PC-9 (cell line): ENCODE measurements at regions of chr5 and their contacts with region 1.

Region 1: GRCh38 chr5:79990598-79991507 is at the start of gene MTX3:
- DNase-seq: peak; percentile 75 to 77
- H3K4me3 ChIP-seq: peak within 1 kb of the TSS; percentile 72
- H3K27ac ChIP-seq: peak within 1 kb of the TSS; percentile 81
- H3K4me1 ChIP-seq: peaks cover 23% of the 10 kb centered on the region
- H3K27me3 ChIP-seq: no peaks in the 10 kb centered on the region
- CTCF ChIP-seq: no peak
- total RNA-seq, gene MTX3: 20.9 and 22.8 TPM in 2 replicates

Region 2: GRCh38 chr5:79829260-79829659 is 161.6 kb before region 1 on chr5:
- CTCF ChIA-PET with region 1: no interaction called
- POLR2A ChIA-PET with region 1: interaction called, 26 read pairs
- intact Hi-C with region 1: no loop called
- DNase-seq: no peak
- H3K4me3 ChIP-seq: no peak overlapping the region
- H3K27ac ChIP-seq: no peak overlapping the region
- H3K4me1 ChIP-seq: no peaks in the 10 kb centered on the region
- H3K27me3 ChIP-seq: no peaks in the 10 kb centered on the region
- CTCF ChIP-seq: peak; percentile 52

Region 3: GRCh38 chr5:79974891-79975290 is 16.0 kb before region 1 on chr5:
- CTCF ChIA-PET with region 1: no interaction called
- POLR2A ChIA-PET with region 1: interaction called, 9 read pairs
- intact Hi-C with region 1: loop called (anchors 2 kb)
- DNase-seq: peak; percentile 41 to 66
- H3K4me3 ChIP-seq: no peak overlapping the region
- H3K27ac ChIP-seq: 0 out of 2 replicates have a peak overlapping the region, but pooled peaks have one; percentile 30
- H3K4me1 ChIP-seq: peaks cover 10% of the 10 kb centered on the region
- H3K27me3 ChIP-seq: no peaks in the 10 kb centered on the region
- CTCF ChIP-seq: no peak

Region 4: GRCh38 chr5:80055491-80056170 is 64.8 kb after region 1 on chr5:
- CTCF ChIA-PET with region 1: no interaction called
- POLR2A ChIA-PET with region 1: no interaction called
- intact Hi-C with region 1: loop called (anchors 10 kb)
- DNase-seq: peak; percentile 87 to 89
- H3K4me3 ChIP-seq: peak overlapping the region; percentile 38; the same call in 1 of the 2 replicates
- H3K27ac ChIP-seq: peak overlapping the region; percentile 69
- H3K4me1 ChIP-seq: peaks cover 38% of the 10 kb centered on the region
- H3K27me3 ChIP-seq: no peaks in the 10 kb centered on the region
- CTCF ChIP-seq: no peak